ENCODE measurements at regions of chr22 and their contacts with region 1.

Region 1: DNA sequence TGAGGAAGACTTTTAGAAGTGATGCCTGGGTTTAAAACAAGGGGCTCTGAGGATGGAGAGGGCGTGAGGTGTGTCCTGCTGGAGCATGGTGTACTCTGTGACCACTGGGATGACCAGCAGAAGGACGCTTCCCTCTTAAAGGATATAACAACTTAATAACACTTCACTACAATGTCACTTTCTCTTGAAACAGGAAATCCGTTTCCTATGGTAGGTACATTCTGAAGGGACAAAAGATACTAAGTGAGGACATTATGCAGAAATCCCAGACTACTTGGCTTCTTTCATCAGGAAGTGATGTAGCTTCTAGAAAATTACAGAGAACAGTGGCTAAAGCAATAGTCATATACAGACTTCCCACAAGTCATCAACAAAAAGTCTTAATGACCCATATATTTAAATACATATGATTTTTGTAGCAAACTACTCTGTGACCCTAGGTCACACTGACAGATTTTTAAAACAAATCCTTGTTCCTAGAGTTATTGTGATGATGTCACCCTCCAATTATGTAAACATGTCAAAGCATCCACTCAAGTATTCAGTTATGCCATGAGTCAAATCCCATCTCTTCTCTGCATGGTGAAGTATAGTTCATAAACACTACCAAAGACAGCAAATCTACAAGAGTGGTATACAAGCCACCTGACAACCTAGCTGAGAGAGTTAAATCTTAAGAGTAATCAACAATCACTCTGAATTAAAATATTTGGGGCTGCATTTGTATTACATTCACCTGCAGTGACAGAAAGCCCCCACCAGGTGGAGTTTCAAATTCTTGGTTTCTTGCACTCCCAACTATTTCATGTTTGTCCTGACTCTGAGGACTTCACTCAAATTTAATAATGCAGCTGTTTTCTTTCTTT is 32.8 kb downstream of the PITPNB start:
- DNase-seq: no peak
- ATAC-seq: peak; percentile 70
- H3K4me3 ChIP-seq: no peak overlapping the region
- H3K27ac ChIP-seq: no peak overlapping the region
- H3K4me1 ChIP-seq: no peaks in the 10 kb centered on the region
- H3K27me3 ChIP-seq: no peaks in the 10 kb centered on the region
- CTCF ChIP-seq: peak; percentile 60 to 66 (median 64)
- EP300 ChIP-seq: no peak
- POLR2A ChIP-seq: no peak
- RAD21 ChIP-seq: peak; percentile 59

Region 2: DNA sequence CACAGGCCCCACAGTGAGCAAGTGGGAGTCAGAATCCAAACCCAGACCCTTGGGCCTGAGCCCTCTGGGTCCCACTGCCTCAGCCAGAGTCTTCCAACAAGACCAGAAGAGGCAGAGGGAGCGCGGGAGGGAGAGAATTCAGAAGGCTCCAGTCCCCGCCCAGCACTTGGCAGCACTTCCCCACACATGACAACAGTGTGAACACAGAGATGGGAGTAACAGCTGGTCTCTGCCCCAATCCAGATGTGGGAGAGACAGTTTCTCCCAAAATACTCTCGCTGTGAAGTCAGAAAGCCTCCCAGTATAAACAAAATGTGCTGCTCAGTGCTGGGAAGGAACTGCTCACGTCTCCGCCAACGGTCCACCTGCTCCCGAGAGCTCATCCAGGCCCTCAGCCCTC is 304.5 kb before region 1 on chr22:
- CTCF ChIA-PET with region 1: no interaction called
- POLR2A ChIA-PET with region 1: no interaction called
- RAD21 ChIA-PET with region 1: no interaction called
- SMC1A ChIA-PET with region 1: no interaction called
- in situ Hi-C with region 1: no loop called
- intact Hi-C with region 1: no loop called
- DNase-seq: no peak
- ATAC-seq: no peak
- H3K4me3 ChIP-seq: no peak overlapping the region
- H3K27ac ChIP-seq: no peak overlapping the region
- H3K4me1 ChIP-seq: no peaks in the 10 kb centered on the region
- H3K27me3 ChIP-seq: peaks cover 0 to 6% of the 10 kb centered on the region in 2 experiments; a peak in 2 of 4 replicates
- CTCF ChIP-seq: no peak
- EP300 ChIP-seq: no peak
- POLR2A ChIP-seq: no peak
- RAD21 ChIP-seq: no peak

Region 3: GRCh38 chr22:27686534-27686933 is 199.7 kb before region 1 on chr22:
- CTCF ChIA-PET with region 1: no interaction called
- POLR2A ChIA-PET with region 1: no interaction called
- RAD21 ChIA-PET with region 1: no interaction called
- SMC1A ChIA-PET with region 1: no interaction called
- in situ Hi-C with region 1: no loop called
- intact Hi-C with region 1: no loop called
- DNase-seq: no peak
- ATAC-seq: no peak
- H3K4me3 ChIP-seq: no peak overlapping the region
- H3K27ac ChIP-seq: no peak overlapping the region
- H3K4me1 ChIP-seq: no peaks in the 10 kb centered on the region
- H3K27me3 ChIP-seq: no peaks in the 10 kb centered on the region
- CTCF ChIP-seq: no peak
- EP300 ChIP-seq: no peak
- POLR2A ChIP-seq: no peak
- RAD21 ChIP-seq: no peak

Region 4: GRCh38 chr22:27853424-27853823 is 32.8 kb before region 1 on chr22:
- CTCF ChIA-PET with region 1: no interaction called
- POLR2A ChIA-PET with region 1: no interaction called
- RAD21 ChIA-PET with region 1: no interaction called
- SMC1A ChIA-PET with region 1: no interaction called
- in situ Hi-C with region 1: no loop called
- intact Hi-C with region 1: no loop called
- DNase-seq: no peak
- ATAC-seq: no peak
- H3K4me3 ChIP-seq: no peak overlapping the region
- H3K27ac ChIP-seq: no peak overlapping the region
- H3K4me1 ChIP-seq: no peaks in the 10 kb centered on the region
- H3K27me3 ChIP-seq: no peaks in the 10 kb centered on the region
- CTCF ChIP-seq: no peak
- EP300 ChIP-seq: no peak
- POLR2A ChIP-seq: no peak
- RAD21 ChIP-seq: no peak

Region 5: DNA sequence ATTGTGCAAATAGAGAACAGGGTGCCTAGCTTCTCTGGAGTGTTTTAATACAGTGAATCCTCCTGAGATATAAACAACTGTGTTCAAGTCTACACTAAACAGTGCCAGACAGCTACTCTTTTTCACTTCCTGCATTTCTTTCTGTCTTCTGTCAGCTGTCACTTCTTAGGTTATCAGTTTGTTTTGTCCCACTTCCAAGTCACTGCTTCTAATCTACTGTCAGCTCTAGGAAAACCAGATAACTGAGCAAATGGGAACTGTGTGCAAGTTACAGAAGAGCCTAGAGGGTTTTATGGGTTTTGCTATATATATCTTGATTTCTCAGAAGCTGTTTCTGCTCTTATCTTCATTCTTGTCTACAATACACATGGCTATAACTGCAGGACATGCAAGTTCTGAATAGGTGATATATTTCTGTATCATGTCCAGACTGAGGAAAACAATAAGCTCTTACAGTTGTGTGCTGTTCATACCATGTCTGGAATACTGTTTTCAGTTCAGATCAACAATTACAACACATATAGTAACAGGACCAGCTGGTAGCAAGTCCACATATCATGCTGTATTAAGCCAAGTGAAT is 27.0 kb after region 1 on chr22:
- CTCF ChIA-PET with region 1: interaction called, 87 read pairs
- POLR2A ChIA-PET with region 1: interaction called, 3 read pairs
- RAD21 ChIA-PET with region 1: interaction called, 6 read pairs
- SMC1A ChIA-PET with region 1: interaction called, 24 read pairs
- in situ Hi-C with region 1: no loop called
- intact Hi-C with region 1: loop called (anchors 2 kb)
- DNase-seq: no peak
- ATAC-seq: peak; percentile 71
- H3K4me3 ChIP-seq: no peak overlapping the region
- H3K27ac ChIP-seq: no peak overlapping the region
- H3K4me1 ChIP-seq: peaks cover 9% of the 10 kb centered on the region; the same call in 1 of the 2 replicates
- H3K27me3 ChIP-seq: no peaks in the 10 kb centered on the region
- CTCF ChIP-seq: no peak
- EP300 ChIP-seq: no peak
- POLR2A ChIP-seq: no peak
- RAD21 ChIP-seq: no peak

Region 6: DNA sequence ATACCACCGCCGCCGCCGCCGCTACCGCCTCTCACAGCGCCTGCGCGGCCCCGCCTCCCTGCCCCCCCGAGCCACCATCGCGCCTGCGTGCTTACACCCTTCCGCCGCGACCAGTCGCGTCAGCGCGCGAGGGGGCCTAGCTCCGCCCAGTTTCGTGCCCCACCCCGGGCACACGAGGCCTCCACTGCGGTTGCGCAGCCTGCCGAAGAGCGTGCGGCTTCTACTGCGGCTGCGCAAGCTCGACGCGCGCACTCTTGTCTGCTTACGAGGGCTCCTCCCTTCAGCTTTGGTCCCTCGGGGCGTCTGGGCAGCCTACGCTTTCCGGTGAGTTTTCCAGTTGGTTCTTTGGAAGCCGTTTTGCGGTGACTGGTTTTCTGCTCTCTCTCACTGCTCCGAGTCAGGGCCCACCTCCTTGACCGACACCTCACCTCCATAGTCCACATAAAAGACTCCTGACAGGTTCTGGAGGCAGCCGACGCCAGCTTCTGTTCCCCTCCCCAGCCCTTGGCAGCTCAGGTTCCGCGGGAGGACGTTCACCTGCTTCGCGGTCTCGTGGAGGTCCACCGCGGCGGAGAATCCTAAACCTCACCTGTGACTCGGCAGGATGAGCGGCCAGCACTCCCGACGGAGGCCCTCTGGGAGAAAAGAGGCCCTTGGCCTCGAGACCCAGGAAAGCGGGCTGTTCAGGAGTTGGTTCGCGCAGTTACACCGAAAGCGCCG is 33.2 kb after region 1 on chr22 and contains the start of gene PITPNB:
- CTCF ChIA-PET with region 1: interaction called, 87 read pairs
- POLR2A ChIA-PET with region 1: no interaction called
- RAD21 ChIA-PET with region 1: interaction called, 21 read pairs
- SMC1A ChIA-PET with region 1: interaction called, 24 read pairs
- in situ Hi-C with region 1: no loop called
- intact Hi-C with region 1: loop called (anchors 2 kb)
- DNase-seq: peak; percentile 90
- ATAC-seq: peak; percentile 87
- H3K4me3 ChIP-seq: peak within 1 kb of the TSS; percentile 85
- H3K27ac ChIP-seq: peak within 1 kb of the TSS; percentile 96
- H3K4me1 ChIP-seq: no peaks in the 10 kb centered on the region
- H3K27me3 ChIP-seq: no peaks in the 10 kb centered on the region
- CTCF ChIP-seq: no peak
- EP300 ChIP-seq: 0 out of 4 replicates have a peak, but pooled peaks of 1 of the 2 experiments have one; percentile 18
- POLR2A ChIP-seq: peak; percentile 80
- RAD21 ChIP-seq: no peak
- polyA plus RNA-seq, gene PITPNB: 43.5 to 52.8 TPM

Region 7: GRCh38 chr22:28009272-28009827 is 123.1 kb after region 1 on chr22:
- CTCF ChIA-PET with region 1: interaction called, 33 read pairs
- POLR2A ChIA-PET with region 1: no interaction called
- RAD21 ChIA-PET with region 1: interaction called, 5 read pairs
- SMC1A ChIA-PET with region 1: interaction called, 22 read pairs
- in situ Hi-C with region 1: loop called (anchors 5 kb)
- intact Hi-C with region 1: loop called (anchors 1 kb)
- DNase-seq: peak; percentile 9
- ATAC-seq: peak; percentile 97
- H3K4me3 ChIP-seq: no peak overlapping the region
- H3K27ac ChIP-seq: no peak overlapping the region
- H3K4me1 ChIP-seq: no peaks in the 10 kb centered on the region
- H3K27me3 ChIP-seq: no peaks in the 10 kb centered on the region
- CTCF ChIP-seq: peak; percentile 93 to 98 (median 95)
- EP300 ChIP-seq: no peak
- POLR2A ChIP-seq: no peak
- RAD21 ChIP-seq: peak; percentile 90

Region 8: GRCh38 chr22:28341001-28341400 is 454.8 kb after region 1 on chr22:
- CTCF ChIA-PET with region 1: no interaction called
- POLR2A ChIA-PET with region 1: no interaction called
- RAD21 ChIA-PET with region 1: no interaction called
- SMC1A ChIA-PET with region 1: no interaction called
- in situ Hi-C with region 1: no loop called
- intact Hi-C with region 1: no loop called
- DNase-seq: no peak
- ATAC-seq: no peak
- H3K4me3 ChIP-seq: no peak overlapping the region
- H3K27ac ChIP-seq: no peak overlapping the region
- H3K4me1 ChIP-seq: no peaks in the 10 kb centered on the region
- H3K27me3 ChIP-seq: no peaks in the 10 kb centered on the region
- CTCF ChIP-seq: no peak
- EP300 ChIP-seq: no peak
- POLR2A ChIP-seq: no peak
- RAD21 ChIP-seq: no peak